Common myeloid progenitor, CD34-positive (primary cell): ENCODE measurements at regions of chr3 and their contacts with region 1.

Region 1: GRCh38 chr3:49539659-49540560 is 14.4 kb upstream of the BSN start:
- DNase-seq: peak; percentile 78 to 87 (median 87)
- H3K4me3 ChIP-seq: peak overlapping the region; percentile 54 to 84 (median 67)
- H3K27ac ChIP-seq: peak overlapping the region in 1 of 2 experiments; percentile 73
- H3K4me1 ChIP-seq: peaks cover 0 to 9% (median 8%) of the 10 kb centered on the region in 4 experiments
- H3K27me3 ChIP-seq: peaks cover 0 to 7% (median 4%) of the 10 kb centered on the region in 5 experiments

Region 2: DNA sequence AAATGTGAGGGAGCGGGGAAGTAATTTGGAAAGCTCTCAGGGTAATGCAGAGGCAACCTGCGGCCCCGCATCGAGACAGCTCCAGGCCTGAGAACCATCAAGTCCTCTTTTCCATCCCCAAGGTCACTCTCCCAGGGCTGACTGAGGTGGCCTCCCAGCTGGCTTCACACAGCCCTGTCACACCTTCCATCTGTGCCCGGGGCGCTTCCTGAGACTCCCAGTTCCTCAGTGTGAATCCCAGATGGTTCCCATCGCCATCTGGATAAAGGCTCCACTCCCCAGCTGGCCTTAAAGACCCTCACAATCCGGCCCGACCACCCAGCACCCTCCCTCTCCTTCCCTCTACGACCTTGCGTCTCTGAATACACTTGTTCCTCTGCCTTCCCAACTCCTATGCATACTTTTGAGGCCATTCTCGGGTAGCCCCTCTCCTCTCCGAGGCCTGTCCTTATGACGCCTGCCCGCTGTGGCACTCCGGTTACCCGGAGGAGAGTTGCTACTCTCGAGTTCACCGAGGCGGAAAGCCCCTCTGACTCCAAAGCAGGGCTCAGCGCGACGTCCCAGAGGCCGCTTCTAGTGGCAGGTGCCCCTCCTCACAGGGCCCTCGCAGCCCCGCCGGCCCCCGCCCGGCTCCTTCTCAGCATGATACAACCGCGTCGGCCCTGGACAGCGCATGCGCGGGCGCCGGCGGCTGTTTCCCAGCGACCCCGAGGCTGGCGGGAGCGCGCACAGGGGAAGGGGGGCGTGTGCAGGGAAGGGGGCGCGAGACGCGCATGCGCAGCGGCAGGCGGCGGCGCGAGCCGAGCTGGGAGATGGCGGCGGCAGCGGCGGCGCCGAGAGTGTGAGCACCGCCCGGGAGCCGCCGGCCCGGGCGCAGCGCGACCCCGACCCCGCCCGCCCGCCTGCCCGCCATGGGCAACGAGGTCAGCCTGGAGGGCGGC is 14.1 kb after region 1 on chr3 and contains the start of gene BSN:
- CTCF ChIA-PET with region 1: interaction called, 16 read pairs
- POLR2A ChIA-PET with region 1: no interaction called
- DNase-seq: peak; percentile 88 to 95 (median 92)
- H3K4me3 ChIP-seq: peak within 1 kb of the TSS; percentile 43 to 75 (median 68)
- H3K27ac ChIP-seq: peak within 1 kb of the TSS in 1 of 2 experiments; percentile 21
- H3K4me1 ChIP-seq: peaks cover 2 to 28% (median 22%) of the 10 kb centered on the region in 4 experiments
- H3K27me3 ChIP-seq: peaks cover 9 to 38% (median 23%) of the 10 kb centered on the region in 5 experiments

Region 3: GRCh38 chr3:49668414-49668797 is 128.5 kb after region 1 on chr3:
- CTCF ChIA-PET with region 1: interaction called, 80 read pairs
- POLR2A ChIA-PET with region 1: interaction called, 5 read pairs
- DNase-seq: peak in 2 of 3 donors; percentile 27 to 39
- H3K4me3 ChIP-seq: no peak overlapping the region
- H3K27ac ChIP-seq: no peak overlapping the region
- H3K4me1 ChIP-seq: peaks cover 0 to 14% (median 10%) of the 10 kb centered on the region in 4 experiments
- H3K27me3 ChIP-seq: no peaks in the 10 kb centered on the region

Region 4: GRCh38 chr3:49673715-49674496 is 134.0 kb after region 1 on chr3 and contains the start of gene APEH:
- CTCF ChIA-PET with region 1: interaction called, 80 read pairs
- POLR2A ChIA-PET with region 1: interaction called, 5 read pairs
- DNase-seq: peak; percentile 98 to 99 (median 98)
- H3K4me3 ChIP-seq: peak within 1 kb of the TSS; percentile 42 to 89 (median 81)
- H3K27ac ChIP-seq: peak within 1 kb of the TSS; percentile 82 to 92
- H3K4me1 ChIP-seq: peaks cover 0 to 25% (median 23%) of the 10 kb centered on the region in 4 experiments
- H3K27me3 ChIP-seq: no peaks in the 10 kb centered on the region